GM10248 (cell line): ENCODE measurements at regions of chr16 and their contacts with region 1.

Region 1: DNA sequence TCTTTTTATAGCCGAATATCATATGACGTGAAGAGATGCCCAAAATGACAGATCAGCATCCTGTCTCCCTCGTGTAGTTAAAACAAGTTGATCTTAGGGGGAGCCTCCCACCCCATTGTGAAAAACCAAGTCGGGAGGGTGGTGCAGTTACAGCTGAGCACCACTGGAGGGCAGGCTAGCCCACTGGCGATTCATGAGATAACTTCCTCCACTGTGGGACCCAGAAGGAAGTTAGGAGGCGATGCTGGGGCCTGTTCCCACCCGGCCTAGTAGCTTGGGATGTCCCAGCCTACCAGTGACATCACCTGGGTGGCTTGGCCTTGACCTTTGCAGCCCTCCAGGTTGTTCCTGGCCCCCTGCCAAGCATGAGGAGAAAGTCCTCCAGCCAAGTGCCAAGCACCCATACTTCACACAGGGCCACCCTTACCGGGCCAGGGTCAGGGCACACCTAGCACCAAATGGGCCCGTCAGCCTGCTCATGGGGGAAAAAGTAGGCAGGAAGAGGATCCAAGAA is 8.1 kb upstream of the CPNE2 start:
- DNase-seq: peak; percentile 88
- CTCF ChIP-seq: peak; percentile 95

Region 2: GRCh38 chr16:57029161-57030160 is 54.9 kb before region 1 on chr16:
- CTCF ChIA-PET with region 1: no interaction called
- POLR2A ChIA-PET with region 1: no interaction called
- DNase-seq: no peak
- CTCF ChIP-seq: no peak

Region 3: DNA sequence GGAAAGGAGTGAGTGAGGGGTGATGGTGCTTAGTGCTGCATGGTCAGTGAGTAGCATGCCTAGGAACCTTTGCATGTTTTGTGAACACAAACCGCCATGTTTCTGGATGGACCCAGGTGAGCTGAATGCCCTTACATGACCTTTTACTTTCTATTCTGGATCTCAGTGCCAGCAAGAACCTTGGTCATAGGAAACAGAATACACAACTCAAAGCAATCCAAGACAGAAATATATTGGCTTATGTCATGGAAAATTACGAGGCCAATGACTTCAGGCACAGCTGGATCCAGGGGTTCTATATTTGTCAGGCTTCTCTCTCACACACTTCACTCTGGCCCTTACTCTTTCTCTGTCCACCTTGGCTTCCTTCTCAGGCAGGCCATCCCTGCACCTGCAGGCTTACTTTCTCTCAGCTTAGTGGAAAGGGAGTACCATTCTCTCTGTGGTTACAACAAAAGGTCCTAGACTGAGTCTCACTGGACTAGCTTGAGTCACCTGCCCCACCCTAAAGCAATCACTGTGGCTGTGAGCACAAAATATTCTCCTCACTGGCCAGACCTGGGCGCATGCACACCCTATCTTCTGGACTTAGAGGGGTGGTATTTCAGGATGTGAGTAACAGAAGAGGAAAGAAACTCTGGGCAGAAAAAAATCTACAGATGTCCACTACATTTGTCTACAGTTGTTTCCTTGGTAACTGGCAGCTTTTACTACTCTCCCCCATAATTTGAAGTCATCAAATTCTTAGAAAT is 12.3 kb before region 1 on chr16:
- CTCF ChIA-PET with region 1: interaction called, 55 read pairs
- POLR2A ChIA-PET with region 1: no interaction called
- DNase-seq: no peak
- CTCF ChIP-seq: no peak

Region 4: GRCh38 chr16:57106767-57107166 is 22.5 kb after region 1 on chr16:
- CTCF ChIA-PET with region 1: interaction called, 39 read pairs
- POLR2A ChIA-PET with region 1: no interaction called
- DNase-seq: no peak
- CTCF ChIP-seq: no peak

Region 5: DNA sequence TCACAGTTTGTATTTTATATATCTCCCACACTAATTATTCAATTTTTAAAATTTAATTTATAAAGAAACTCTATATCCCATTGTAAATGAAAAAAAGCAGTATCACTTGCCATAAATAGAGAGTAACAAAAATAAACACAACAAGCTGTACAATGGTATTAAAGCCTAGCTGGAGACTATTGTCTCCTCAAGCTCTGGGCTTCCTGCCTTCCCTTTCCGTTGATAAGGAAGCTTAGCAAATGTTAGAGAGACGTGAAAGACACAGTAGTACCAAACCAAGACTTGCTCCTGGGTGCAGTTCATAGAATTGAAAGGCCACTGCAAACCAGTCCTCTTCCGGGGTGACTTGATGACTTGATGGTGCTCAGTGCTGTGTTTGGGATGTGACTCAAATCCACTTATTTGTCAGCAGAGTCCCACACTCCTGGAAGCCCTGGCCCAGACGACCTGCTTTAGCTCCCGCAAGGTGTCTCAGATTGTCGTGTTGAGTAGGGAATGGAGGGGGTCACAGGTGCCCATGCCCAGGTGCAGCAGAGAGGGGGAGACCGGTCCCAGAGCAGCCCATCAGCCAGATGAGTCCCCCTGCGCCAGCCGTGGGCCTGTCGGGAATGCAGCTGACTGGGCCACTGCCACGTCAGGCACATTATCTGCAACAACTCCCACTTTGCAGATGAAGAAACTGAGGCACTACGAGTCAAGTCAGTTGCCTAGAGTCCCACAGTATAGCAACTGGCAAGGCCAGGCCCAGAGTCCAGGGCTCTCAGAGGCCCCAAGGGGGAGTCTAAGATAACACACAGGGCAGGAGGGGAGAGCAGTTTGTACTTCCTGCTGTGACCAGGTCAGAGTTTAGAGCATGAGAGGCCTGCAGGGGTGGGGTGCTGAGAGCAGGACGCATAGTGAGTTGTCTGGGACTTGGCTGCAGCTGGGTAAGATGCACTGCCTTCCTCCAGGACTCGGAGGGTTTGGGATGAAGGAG is 61.0 kb after region 1 on chr16:
- CTCF ChIA-PET with region 1: interaction called, 11 read pairs
- POLR2A ChIA-PET with region 1: no interaction called
- DNase-seq: no peak
- CTCF ChIP-seq: no peak

Region 6: DNA sequence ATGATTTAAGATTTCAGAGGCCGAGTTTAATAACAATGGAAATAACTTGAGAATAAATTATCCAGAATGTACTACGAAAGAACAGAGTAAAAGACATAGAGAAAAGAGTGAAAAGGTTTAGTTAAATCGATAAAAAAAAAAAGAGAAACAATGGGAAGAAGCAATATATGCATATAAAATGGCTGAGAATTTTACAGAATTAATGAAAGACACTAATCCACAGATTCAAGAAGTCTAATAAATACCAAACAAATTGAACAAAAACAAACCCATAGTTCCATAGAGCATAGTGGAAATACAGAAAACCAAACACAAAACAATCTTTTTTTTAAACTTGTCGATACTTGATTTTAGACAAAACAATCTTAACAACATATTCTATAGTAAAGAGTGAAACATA is 99.8 kb after region 1 on chr16:
- CTCF ChIA-PET with region 1: interaction called, 11 read pairs
- POLR2A ChIA-PET with region 1: no interaction called
- DNase-seq: no peak
- CTCF ChIP-seq: no peak

Region 7: GRCh38 chr16:57226701-57227621 is 142.6 kb after region 1 on chr16:
- CTCF ChIA-PET with region 1: no interaction called
- POLR2A ChIA-PET with region 1: no interaction called
- DNase-seq: no peak
- CTCF ChIP-seq: no peak